ENCODE measurements at regions of chr20 and their contacts with region 1.

Region 1: DNA sequence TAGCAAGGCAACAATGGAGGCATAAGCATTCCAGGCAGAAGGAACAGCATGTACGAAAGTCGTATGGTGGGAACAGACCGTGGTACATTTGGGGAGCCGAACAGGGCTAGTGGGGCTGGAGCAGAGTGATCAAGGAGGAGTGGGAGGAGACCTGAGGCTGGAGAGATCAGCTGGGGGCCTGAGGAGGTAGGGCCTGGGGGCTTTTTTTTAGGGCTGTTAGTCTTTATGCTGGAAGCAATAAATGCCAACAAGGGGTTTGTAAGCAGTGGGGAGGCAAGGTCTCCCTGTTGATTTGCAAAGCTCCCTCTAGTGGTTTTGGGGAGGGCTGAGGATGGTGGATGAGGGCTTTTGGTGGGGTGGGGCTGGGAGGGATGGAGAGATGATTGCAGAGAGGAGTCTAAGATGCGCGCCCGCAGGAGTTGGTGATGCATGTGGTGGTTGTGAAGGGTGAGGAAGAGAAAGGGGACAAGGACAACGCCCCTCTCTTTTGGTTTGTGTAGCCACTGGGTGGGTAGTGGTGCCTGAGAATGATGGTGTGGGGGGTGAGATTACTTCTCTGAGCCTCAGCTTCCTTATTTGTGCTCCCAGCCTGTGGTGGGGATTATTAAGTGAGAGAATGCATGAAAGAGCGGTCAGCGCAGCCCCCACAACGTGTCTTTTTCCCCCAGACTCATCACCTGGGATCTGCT is 74.1 kb upstream of the TOX2 start:
- DNase-seq: no peak
- H3K4me3 ChIP-seq: no peak overlapping the region
- H3K27ac ChIP-seq: no peak overlapping the region
- H3K4me1 ChIP-seq: peaks cover 24% of the 10 kb centered on the region
- H3K27me3 ChIP-seq: no peaks in the 10 kb centered on the region
- CTCF ChIP-seq: peak; percentile 10 to 52
- POLR2A ChIP-seq: no peak

Region 2: DNA sequence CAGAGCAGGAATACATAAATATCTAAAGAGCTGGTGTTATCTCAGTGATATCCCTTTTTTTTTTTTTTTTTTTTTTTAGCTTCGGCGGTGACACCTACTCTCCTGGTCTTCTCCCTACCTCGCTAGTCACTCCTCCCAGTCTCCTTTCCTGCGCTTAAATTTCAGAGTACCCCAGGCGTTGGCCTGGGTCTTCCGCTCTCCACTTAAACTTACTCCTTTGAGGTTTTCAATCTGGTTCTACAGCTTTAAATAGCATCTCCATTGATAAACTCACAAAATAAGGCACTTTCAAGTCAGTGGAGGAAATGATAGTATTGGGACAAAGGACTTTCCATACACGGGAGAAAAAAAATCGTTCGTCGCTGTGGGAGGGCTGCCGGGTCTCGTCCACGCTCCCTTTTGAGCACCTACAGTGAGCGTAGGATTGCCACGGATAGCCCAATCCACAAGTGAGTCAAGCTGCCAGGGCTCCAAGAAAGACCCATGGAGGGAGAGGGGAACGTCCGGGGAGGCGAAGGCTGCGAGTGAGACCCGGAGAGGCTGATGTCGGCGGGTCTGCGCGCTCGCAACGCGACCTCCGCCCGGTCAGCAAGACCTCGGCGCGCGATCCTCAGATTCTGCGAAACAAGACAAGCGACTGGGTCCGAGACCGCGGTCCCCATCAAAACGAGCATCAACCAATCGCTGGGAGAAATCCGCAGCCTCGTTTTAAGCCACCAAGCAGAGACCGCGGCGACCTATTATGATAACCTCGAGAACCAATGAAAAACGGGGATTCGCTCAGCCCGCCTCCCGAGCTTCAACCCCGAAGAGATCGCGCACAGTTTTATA is 383.5 kb before region 1 on chr20:
- CTCF ChIA-PET with region 1: no interaction called
- POLR2A ChIA-PET with region 1: no interaction called
- dilution Hi-C with region 1: no loop called
- intact Hi-C with region 1: loop called (anchors 10 kb)
- DNase-seq: peak; percentile 92
- H3K4me3 ChIP-seq: peak overlapping the region; percentile 74 to 99 (median 90)
- H3K27ac ChIP-seq: peak overlapping the region; percentile 96
- H3K4me1 ChIP-seq: peaks cover 16% of the 10 kb centered on the region
- H3K27me3 ChIP-seq: peaks cover 5 to 6% of the 10 kb centered on the region in 2 experiments
- CTCF ChIP-seq: no peak
- POLR2A ChIP-seq: no peak

Region 3: GRCh38 chr20:43749734-43750294 is 90.7 kb before region 1 on chr20:
- CTCF ChIA-PET with region 1: interaction called, 11 read pairs
- POLR2A ChIA-PET with region 1: interaction called, 3 read pairs
- dilution Hi-C with region 1: no loop called
- intact Hi-C with region 1: loop called (anchors 1 kb)
- DNase-seq: peak; percentile 37
- H3K4me3 ChIP-seq: no peak overlapping the region
- H3K27ac ChIP-seq: no peak overlapping the region
- H3K4me1 ChIP-seq: peaks cover 12% of the 10 kb centered on the region
- H3K27me3 ChIP-seq: no peaks in the 10 kb centered on the region
- CTCF ChIP-seq: peak; percentile 99
- POLR2A ChIP-seq: no peak

Region 4: GRCh38 chr20:43857127-43857526 is 16.6 kb after region 1 on chr20:
- CTCF ChIA-PET with region 1: interaction called, 13 read pairs
- POLR2A ChIA-PET with region 1: no interaction called
- dilution Hi-C with region 1: no loop called
- intact Hi-C with region 1: no loop called
- DNase-seq: no peak
- H3K4me3 ChIP-seq: no peak overlapping the region
- H3K27ac ChIP-seq: no peak overlapping the region
- H3K4me1 ChIP-seq: no peaks in the 10 kb centered on the region
- H3K27me3 ChIP-seq: peaks cover 0 to 6% of the 10 kb centered on the region in 2 experiments
- CTCF ChIP-seq: no peak
- POLR2A ChIP-seq: no peak

Region 5: DNA sequence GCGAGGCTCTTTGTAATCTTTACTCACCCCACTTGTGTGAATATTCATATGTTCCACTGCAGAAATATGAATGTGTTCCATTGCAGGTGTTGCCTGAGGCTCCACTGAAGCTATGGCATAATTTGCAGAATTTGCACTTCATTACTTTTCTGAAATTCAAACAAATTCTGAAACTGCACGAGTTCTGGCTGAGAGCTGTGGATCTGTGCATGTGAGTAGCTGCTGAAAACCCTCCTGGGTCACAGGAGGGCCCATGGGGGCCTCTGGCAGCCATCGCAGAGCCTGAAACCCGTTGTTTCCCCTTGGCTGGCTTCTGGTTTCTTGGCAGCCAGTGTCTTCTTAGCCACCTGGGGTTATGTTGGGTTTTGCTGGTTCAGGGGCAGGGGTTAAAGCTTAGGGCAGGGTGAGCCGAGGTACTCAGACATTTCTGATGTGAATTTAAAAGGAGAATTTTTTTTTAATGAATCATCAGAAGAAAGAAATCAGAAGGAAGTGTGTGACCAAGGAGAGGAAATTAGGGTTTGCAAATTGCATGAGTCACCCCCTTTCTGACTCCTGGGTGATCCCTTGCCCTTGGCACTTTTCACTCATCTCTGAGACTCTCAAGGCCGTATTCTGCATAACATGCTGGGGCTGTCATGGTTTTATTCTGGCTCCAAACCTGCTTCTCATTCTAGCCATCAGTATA is 114.7 kb after region 1 on chr20:
- CTCF ChIA-PET with region 1: interaction called, 3 read pairs
- POLR2A ChIA-PET with region 1: no interaction called
- dilution Hi-C with region 1: no loop called
- intact Hi-C with region 1: loop called (anchors 1 kb)
- DNase-seq: peak; percentile 92
- H3K4me3 ChIP-seq: no peak overlapping the region
- H3K27ac ChIP-seq: peak overlapping the region; percentile 80
- H3K4me1 ChIP-seq: peaks cover 47% of the 10 kb centered on the region
- H3K27me3 ChIP-seq: no peaks in the 10 kb centered on the region
- CTCF ChIP-seq: no peak
- POLR2A ChIP-seq: peak; percentile 41

Region 6: GRCh38 chr20:44018259-44018941 is 177.9 kb after region 1 on chr20:
- CTCF ChIA-PET with region 1: no interaction called
- POLR2A ChIA-PET with region 1: no interaction called
- dilution Hi-C with region 1: no loop called
- intact Hi-C with region 1: loop called (anchors 2 kb)
- DNase-seq: peak; percentile 84
- H3K4me3 ChIP-seq: no peak overlapping the region
- H3K27ac ChIP-seq: no peak overlapping the region
- H3K4me1 ChIP-seq: peaks cover 39% of the 10 kb centered on the region
- H3K27me3 ChIP-seq: no peaks in the 10 kb centered on the region
- CTCF ChIP-seq: no peak
- POLR2A ChIP-seq: no peak

Region 7: GRCh38 chr20:45406259-45407066 is 1565.9 kb after region 1 on chr20:
- CTCF ChIA-PET with region 1: no interaction called
- POLR2A ChIA-PET with region 1: no interaction called
- dilution Hi-C with region 1: no loop called
- intact Hi-C with region 1: no loop called
- DNase-seq: peak; percentile 35
- H3K4me3 ChIP-seq: peak overlapping the region; percentile 7 to 85 (median 36)
- H3K27ac ChIP-seq: no peak overlapping the region
- H3K4me1 ChIP-seq: peaks cover 3% of the 10 kb centered on the region
- H3K27me3 ChIP-seq: peaks cover 6% of the 10 kb centered on the region in 2 experiments
- CTCF ChIP-seq: no peak
- POLR2A ChIP-seq: no peak

Measured in endothelial cell of umbilical vein (primary cell).